A673 (cell line): ENCODE measurements at regions of chr14 and their contacts with region 1.

Region 1: GRCh38 chr14:20690848-20691523 is 2.4 kb downstream of the ANG start:
- DNase-seq: peak; percentile 74
- H3K4me3 ChIP-seq: no peak overlapping the region
- H3K27ac ChIP-seq: no peak overlapping the region
- H3K4me1 ChIP-seq: no peaks in the 10 kb centered on the region
- H3K27me3 ChIP-seq: no peaks in the 10 kb centered on the region
- CTCF ChIP-seq: peak; percentile 88

Region 2: GRCh38 chr14:20530771-20531571 is 160.0 kb before region 1 on chr14:
- CTCF ChIA-PET with region 1: interaction called, 3 read pairs
- POLR2A ChIA-PET with region 1: no interaction called
- intact Hi-C with region 1: loop called (anchors 1 kb)
- DNase-seq: peak; percentile 85
- H3K4me3 ChIP-seq: no peak overlapping the region
- H3K27ac ChIP-seq: no peak overlapping the region
- H3K4me1 ChIP-seq: no peaks in the 10 kb centered on the region
- H3K27me3 ChIP-seq: peaks cover 16% of the 10 kb centered on the region
- CTCF ChIP-seq: peak; percentile 87

Region 3: GRCh38 chr14:20632682-20633428 is 58.1 kb before region 1 on chr14:
- CTCF ChIA-PET with region 1: no interaction called
- POLR2A ChIA-PET with region 1: no interaction called
- intact Hi-C with region 1: loop called (anchors 2 kb)
- DNase-seq: peak; percentile 96
- H3K4me3 ChIP-seq: peak overlapping the region; percentile 58
- H3K27ac ChIP-seq: no peak overlapping the region
- H3K4me1 ChIP-seq: peaks cover 7% of the 10 kb centered on the region
- H3K27me3 ChIP-seq: peaks cover 6% of the 10 kb centered on the region
- CTCF ChIP-seq: no peak

Region 4: DNA sequence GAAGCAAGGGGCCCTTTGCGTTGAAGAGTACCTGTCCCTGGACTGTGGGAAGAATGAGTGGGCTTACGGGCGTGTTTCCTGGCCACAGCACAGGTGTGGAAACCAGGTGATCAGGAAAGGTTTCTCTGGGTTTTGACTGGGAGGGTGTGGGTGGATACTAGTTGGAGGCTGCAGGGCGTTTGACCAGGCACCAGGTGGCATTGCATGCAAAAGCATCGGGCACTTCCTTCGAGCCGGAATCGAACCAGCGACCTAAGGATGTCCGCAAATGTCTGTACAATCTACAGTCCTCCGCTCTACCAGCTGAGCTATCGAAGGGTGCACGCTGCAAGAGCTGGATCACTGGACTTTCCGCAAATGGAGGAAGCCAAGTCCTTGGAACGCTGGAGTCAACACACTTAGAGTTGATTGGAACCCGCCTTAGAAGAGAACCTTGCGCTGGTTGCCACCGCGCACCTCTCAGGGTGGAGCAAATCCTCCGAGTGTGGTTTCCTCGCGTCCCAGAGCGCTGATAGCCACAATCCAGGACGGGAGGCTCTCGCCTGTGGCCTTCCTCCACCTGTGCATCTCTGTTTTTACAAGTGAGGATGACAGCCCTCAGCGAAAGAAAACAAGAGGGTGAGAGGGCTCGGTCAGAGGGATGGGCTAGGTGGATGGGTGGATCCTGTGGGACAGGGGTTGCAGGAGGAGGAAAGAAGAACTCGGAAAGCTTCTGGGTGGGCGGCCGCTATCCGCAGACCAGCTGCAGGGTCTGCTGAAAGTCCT is 27.8 kb before region 1 on chr14:
- CTCF ChIA-PET with region 1: interaction called, 17 read pairs
- POLR2A ChIA-PET with region 1: no interaction called
- intact Hi-C with region 1: no loop called
- DNase-seq: peak; percentile 86
- H3K4me3 ChIP-seq: peak overlapping the region; percentile 46
- H3K27ac ChIP-seq: no peak overlapping the region
- H3K4me1 ChIP-seq: no peaks in the 10 kb centered on the region
- H3K27me3 ChIP-seq: peaks cover 18% of the 10 kb centered on the region
- CTCF ChIP-seq: peak; percentile 47

Region 5: DNA sequence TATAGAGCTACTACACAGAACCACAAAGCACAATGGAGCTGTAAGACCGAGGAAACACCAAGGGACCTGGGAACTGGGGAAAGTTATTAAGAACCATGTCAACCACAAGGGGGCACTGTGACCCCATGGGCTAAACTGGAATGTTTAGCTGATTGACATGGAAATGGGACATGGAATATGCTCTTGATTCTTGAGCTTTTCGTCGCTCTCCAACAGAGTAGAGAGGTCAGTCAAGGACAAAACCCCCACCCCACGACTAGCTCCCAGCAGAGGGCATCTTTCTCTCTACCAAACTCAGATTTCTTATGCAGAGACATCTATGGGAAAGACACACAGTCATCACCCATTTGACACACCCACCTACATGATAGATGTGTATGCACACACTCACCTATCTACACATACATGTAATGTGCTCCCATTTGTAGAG is 323.8 kb after region 1 on chr14:
- CTCF ChIA-PET with region 1: no interaction called
- POLR2A ChIA-PET with region 1: no interaction called
- intact Hi-C with region 1: no loop called
- DNase-seq: peak; percentile 93
- H3K4me3 ChIP-seq: peak overlapping the region; percentile 8
- H3K27ac ChIP-seq: no peak overlapping the region
- H3K4me1 ChIP-seq: no peaks in the 10 kb centered on the region
- H3K27me3 ChIP-seq: no peaks in the 10 kb centered on the region
- CTCF ChIP-seq: peak; percentile 92

Region 6: GRCh38 chr14:21039585-21040369 is 348.8 kb after region 1 on chr14:
- CTCF ChIA-PET with region 1: no interaction called
- POLR2A ChIA-PET with region 1: no interaction called
- intact Hi-C with region 1: loop called (anchors 10 kb)
- DNase-seq: peak; percentile 68
- H3K4me3 ChIP-seq: no peak overlapping the region
- H3K27ac ChIP-seq: no peak overlapping the region
- H3K4me1 ChIP-seq: no peaks in the 10 kb centered on the region
- H3K27me3 ChIP-seq: no peaks in the 10 kb centered on the region
- CTCF ChIP-seq: peak; percentile 66